ENCODE measurements at regions of chr6 and their contacts with region 1.

Region 1: DNA sequence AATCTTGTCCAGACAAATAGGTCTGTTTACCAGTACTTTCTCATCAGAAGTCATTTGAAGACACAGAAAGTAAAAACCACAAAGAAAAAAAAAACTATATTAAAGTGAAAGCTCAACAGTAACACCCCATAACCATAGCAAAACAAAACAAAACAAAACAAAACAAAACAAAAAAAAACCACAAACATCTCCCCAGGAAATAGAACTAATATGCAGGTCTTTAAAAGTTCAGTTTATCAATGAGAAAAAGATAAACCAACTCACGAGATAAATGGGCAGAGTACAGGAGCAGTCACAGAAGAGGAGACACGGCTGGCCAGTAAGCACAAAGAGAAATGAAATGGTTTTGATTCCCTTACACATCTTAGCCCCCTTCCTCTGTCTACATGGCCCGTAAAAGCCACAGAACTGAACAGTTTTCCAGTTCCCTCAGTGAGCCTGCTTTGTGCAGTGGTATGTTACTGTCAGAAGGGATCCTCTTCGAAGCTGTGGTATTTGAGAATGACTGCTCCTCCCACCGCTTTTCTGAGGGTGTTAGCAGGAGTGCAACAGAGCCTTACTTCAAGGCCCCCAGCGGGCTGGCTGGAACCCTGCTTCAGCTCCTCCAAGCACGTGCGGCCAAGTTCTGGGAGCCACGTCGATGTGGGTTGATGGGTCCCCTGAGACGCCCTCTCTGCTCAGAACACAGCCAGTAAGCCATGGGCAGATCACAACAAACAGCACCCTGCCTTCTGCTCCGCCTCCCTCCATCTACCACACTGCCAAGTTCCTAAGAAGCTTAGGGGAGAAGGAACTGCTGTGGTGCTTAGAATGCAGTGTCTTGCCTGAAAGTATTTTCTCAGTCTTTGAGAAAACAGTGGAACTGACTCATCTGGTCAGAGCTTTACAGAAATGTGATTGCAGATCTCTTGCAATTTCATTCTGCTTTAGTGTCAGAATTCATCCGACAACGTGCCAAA is 14.0 kb downstream of the UST start:
- DNase-seq: peak; percentile 71
- ATAC-seq: peak; percentile 67
- H3K4me3 Mint-ChIP-seq: peak overlapping the region; percentile 67
- H3K27ac Mint-ChIP-seq: peak overlapping the region; percentile 86
- H3K4me1 Mint-ChIP-seq: peaks cover 66% of the 10 kb centered on the region
- H3K27me3 Mint-ChIP-seq: peaks cover 15% of the 10 kb centered on the region

Region 2: GRCh38 chr6:148620579-148621298 is 140.1 kb before region 1 on chr6:
- CTCF ChIA-PET with region 1: no interaction called
- POLR2A ChIA-PET with region 1: interaction called, 3 read pairs
- intact Hi-C with region 1: loop called in 1 of 2 experiments (anchors 1 kb)
- DNase-seq: peak; percentile 16
- ATAC-seq: peak; percentile 78
- H3K4me3 Mint-ChIP-seq: no peak overlapping the region
- H3K27ac Mint-ChIP-seq: no peak overlapping the region
- H3K4me1 Mint-ChIP-seq: no peaks in the 10 kb centered on the region
- H3K27me3 Mint-ChIP-seq: peaks cover 6% of the 10 kb centered on the region

Region 3: GRCh38 chr6:148746363-148747144 is 14.3 kb before region 1 on chr6 and contains the start of gene UST:
- CTCF ChIA-PET with region 1: interaction called, 15 read pairs
- POLR2A ChIA-PET with region 1: interaction called, 3 read pairs
- intact Hi-C with region 1: loop called (anchors 1 kb)
- DNase-seq: peak; percentile 79
- ATAC-seq: peak; percentile 59
- H3K4me3 Mint-ChIP-seq: peak within 1 kb of the TSS; percentile 87
- H3K27ac Mint-ChIP-seq: peak within 1 kb of the TSS; percentile 69
- H3K4me1 Mint-ChIP-seq: peaks cover 23% of the 10 kb centered on the region
- H3K27me3 Mint-ChIP-seq: peaks cover 40% of the 10 kb centered on the region
- total RNA-seq, gene UST: 2.2 to 2.8 TPM

Region 4: DNA sequence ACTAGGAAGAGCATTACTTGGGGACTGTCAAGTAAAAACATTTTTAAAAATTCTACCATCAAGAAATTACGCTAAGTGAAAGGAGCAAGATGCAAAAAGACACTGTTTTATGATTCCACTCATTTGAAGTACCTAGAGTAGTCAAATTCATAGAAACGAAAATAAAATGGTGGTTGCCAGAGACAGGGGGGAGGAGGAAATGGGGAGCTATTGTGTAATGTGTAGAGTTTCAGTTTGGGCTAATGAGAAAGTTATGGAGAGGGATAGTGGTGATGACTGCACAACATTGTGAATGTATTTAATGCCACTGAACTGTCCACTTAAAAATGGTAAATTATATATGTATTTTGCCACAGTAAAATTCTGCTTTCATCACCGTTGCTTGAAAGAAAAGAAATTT is 69.8 kb after region 1 on chr6:
- CTCF ChIA-PET with region 1: no interaction called
- POLR2A ChIA-PET with region 1: interaction called, 4 read pairs
- intact Hi-C with region 1: loop called (anchors 1 kb)
- DNase-seq: no peak
- ATAC-seq: peak; percentile 75
- H3K4me3 Mint-ChIP-seq: peak overlapping the region; percentile 65
- H3K27ac Mint-ChIP-seq: peak overlapping the region; percentile 49
- H3K4me1 Mint-ChIP-seq: peaks cover 39% of the 10 kb centered on the region
- H3K27me3 Mint-ChIP-seq: peaks cover 11% of the 10 kb centered on the region

Region 5: DNA sequence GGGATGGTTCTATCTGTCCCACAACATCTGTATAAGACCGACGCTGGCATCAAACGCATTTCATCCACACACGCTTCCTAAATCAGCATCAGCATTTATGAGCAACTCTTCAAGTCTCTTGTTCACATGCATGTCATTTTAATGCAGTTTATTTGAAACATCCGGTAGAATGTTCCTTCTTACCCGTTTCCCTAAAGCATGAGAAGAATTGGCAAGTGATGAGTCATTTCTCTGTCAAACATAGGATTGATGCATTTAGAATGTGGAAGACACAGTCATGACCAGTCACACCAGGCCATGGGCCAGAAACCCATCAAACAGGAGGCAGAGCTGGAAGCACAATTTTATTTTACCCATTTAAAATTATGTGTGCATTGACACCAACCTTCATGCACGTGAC is 108.7 kb after region 1 on chr6:
- CTCF ChIA-PET with region 1: no interaction called
- POLR2A ChIA-PET with region 1: interaction called, 4 read pairs
- intact Hi-C with region 1: loop called in 1 of 2 experiments (anchors 1 kb)
- DNase-seq: no peak
- ATAC-seq: no peak
- H3K4me3 Mint-ChIP-seq: no peak overlapping the region
- H3K27ac Mint-ChIP-seq: no peak overlapping the region
- H3K4me1 Mint-ChIP-seq: peaks cover 28% of the 10 kb centered on the region
- H3K27me3 Mint-ChIP-seq: peaks cover 2% of the 10 kb centered on the region

Region 6: GRCh38 chr6:149211046-149211571 is 450.3 kb after region 1 on chr6:
- CTCF ChIA-PET with region 1: no interaction called
- POLR2A ChIA-PET with region 1: no interaction called
- intact Hi-C with region 1: loop called in 1 of 2 experiments (anchors 5 kb)
- DNase-seq: peak; percentile 36
- ATAC-seq: peak; percentile 54
- H3K4me3 Mint-ChIP-seq: no peak overlapping the region
- H3K27ac Mint-ChIP-seq: peak overlapping the region; percentile 82
- H3K4me1 Mint-ChIP-seq: peaks cover 3% of the 10 kb centered on the region
- H3K27me3 Mint-ChIP-seq: no peaks in the 10 kb centered on the region

Region 7: GRCh38 chr6:149499066-149499465 is 738.2 kb after region 1 on chr6:
- CTCF ChIA-PET with region 1: no interaction called
- POLR2A ChIA-PET with region 1: no interaction called
- intact Hi-C with region 1: loop called in 1 of 2 experiments (anchors 10 kb)
- DNase-seq: no peak
- ATAC-seq: no peak
- H3K4me3 Mint-ChIP-seq: no peak overlapping the region
- H3K27ac Mint-ChIP-seq: peak overlapping the region; percentile 76
- H3K4me1 Mint-ChIP-seq: peaks cover 85% of the 10 kb centered on the region
- H3K27me3 Mint-ChIP-seq: no peaks in the 10 kb centered on the region